ENCODE measurements at regions of chr13 and their contacts with region 1.

Region 1: DNA sequence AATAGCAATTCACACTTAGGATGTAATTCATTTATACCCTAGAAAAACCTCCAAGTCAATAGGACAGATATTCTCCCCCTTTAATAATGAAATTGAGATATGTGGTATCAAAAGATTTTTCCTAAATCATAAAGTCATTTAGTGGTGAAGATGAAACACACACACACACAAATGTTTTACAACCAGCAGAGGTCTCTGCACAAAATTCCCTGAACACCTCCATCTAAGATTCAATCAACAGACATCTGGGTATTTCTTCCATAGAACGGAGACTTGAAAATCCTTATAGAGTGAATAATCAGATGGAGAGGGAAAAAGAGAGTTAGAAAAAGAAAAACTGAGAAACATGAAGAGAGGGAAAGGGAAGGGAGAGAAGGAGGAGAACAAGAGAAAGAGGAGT is 52.8 kb downstream of the MYCBP2 start:
- DNase-seq: no peak
- ATAC-seq: no peak

Region 2: DNA sequence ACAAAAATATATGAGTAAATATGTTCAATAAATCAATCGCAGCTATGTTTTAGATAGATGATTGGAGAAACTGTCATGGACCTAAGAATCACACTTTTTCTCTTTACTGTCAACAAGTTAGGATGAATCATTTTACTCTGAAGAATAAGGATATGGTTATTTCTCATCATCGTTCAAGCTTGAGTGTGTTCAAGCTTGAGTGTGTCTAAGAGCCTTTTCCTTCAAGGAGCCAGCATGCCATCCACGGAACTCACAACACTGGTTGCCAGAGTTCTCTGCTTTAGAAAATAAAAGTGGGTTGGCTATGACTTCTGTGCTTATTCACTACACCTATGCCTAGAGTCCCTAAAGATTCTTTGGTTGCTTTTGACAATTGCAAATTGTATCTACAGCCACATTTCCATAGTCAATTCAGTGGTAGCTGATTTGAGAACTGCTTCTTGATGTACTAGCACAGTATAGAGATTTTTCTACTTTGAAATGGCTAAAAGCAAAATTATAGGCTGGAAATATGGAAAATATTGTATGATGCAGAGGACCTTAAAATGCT is 203.2 kb after region 1 on chr13:
- intact Hi-C with region 1: loop called in 1 of 2 experiments (anchors 10 kb)
- DNase-seq: no peak
- ATAC-seq: no peak